Endothelial cell of umbilical vein (primary cell): ENCODE measurements at regions of chr9 and their contacts with region 1.

Region 1: DNA sequence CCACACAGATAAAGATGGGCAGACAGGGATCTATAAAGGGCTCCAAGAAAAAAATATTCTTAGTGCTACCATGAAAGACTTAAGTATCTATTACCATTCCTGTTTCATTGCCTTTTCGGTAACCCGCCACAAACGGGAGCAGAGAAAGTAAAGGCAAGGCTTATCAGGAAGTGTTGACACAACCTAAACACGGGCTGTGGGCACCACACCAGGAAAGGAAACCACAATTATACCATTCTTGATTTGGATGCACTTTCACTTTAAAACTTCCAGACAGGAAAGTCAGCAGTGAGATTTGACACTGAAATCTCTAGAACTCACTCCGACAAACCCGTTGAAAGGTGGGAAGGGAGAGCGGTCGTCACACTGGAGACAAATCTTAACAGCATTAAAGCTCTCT is 6.5 kb downstream of the TLE1 start:
- DNase-seq: peak; percentile 76
- H3K4me3 ChIP-seq: peak overlapping the region in 1 of 3 experiments; percentile 17
- H3K27ac ChIP-seq: peak overlapping the region; percentile 1
- H3K4me1 ChIP-seq: peaks cover 43% of the 10 kb centered on the region
- H3K27me3 ChIP-seq: no peaks in the 10 kb centered on the region
- CTCF ChIP-seq: no peak
- POLR2A ChIP-seq: no peak

Region 2: DNA sequence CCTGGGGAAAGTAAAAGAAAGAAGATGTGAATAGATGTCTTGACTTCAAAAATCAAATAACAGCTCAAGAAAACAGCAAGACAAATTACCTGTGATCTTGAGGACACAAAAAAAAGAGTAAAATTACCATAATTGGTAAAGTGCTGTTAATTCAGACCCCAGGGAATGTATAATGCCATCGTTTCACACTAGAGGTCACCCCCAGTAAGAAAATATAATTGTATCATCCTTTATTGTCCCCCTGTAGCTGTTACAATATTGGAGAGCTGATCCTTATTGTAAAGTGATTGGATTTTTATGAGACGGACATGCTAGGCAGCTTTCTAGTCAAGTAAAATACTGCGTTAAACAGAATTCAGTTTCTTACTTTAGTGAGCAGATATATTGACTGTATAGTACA is 370.5 kb before region 1 on chr9:
- CTCF ChIA-PET with region 1: interaction called, 9 read pairs
- POLR2A ChIA-PET with region 1: no interaction called
- dilution Hi-C with region 1: no loop called
- intact Hi-C with region 1: loop called (anchors 1 kb)
- DNase-seq: peak; percentile 32
- H3K4me3 ChIP-seq: no peak overlapping the region
- H3K27ac ChIP-seq: no peak overlapping the region
- H3K4me1 ChIP-seq: no peaks in the 10 kb centered on the region
- H3K27me3 ChIP-seq: no peaks in the 10 kb centered on the region
- CTCF ChIP-seq: peak in 1 of 2 donors; percentile 9
- POLR2A ChIP-seq: no peak

Region 3: DNA sequence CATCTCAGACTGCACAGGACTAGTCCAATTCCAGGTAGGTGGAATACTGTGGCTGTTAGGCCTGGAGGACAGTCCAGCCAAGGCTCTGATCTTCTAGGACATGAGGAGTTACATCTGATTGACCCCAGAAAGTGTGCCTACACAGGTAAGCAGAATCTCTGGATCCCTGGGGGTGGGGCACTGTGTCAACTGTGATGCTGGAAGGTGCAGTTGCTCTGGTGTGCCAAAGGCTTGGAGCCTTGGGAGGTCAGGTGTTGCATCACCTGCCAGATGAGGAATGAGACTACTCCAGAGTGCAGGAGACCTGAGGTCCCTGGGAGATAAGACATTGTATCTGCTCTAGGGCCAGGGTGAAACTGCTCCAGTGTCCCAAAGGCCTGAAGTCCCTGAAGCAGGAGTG is 356.2 kb before region 1 on chr9:
- CTCF ChIA-PET with region 1: no interaction called
- POLR2A ChIA-PET with region 1: no interaction called
- dilution Hi-C with region 1: no loop called
- intact Hi-C with region 1: no loop called
- DNase-seq: no peak
- H3K4me3 ChIP-seq: no peak overlapping the region
- H3K27ac ChIP-seq: no peak overlapping the region
- H3K4me1 ChIP-seq: peaks cover 3% of the 10 kb centered on the region
- H3K27me3 ChIP-seq: no peaks in the 10 kb centered on the region
- CTCF ChIP-seq: no peak
- POLR2A ChIP-seq: no peak

Region 4: DNA sequence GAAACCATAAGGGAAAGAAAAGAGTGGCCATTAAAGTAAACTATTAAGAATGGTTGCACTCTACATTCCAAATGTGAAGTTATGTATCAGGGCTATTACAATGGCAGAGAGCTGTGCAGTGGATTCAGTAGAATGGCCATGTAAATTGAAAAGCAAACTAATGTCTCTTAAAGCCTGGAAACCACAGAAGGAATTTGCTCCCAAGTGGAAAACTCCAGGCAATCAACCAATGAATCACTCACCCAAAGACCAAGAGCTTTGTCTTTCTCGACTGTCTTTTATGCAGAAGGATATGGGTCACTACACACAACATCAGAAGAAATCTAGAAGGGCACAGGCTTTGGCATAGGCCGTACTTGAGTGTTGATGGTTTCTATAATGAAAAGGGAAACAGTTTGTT is 108.4 kb before region 1 on chr9:
- CTCF ChIA-PET with region 1: no interaction called
- POLR2A ChIA-PET with region 1: no interaction called
- dilution Hi-C with region 1: no loop called
- intact Hi-C with region 1: no loop called
- DNase-seq: no peak
- H3K4me3 ChIP-seq: no peak overlapping the region
- H3K27ac ChIP-seq: no peak overlapping the region
- H3K4me1 ChIP-seq: peaks cover 12% of the 10 kb centered on the region
- H3K27me3 ChIP-seq: no peaks in the 10 kb centered on the region
- CTCF ChIP-seq: no peak
- POLR2A ChIP-seq: no peak

Region 5: DNA sequence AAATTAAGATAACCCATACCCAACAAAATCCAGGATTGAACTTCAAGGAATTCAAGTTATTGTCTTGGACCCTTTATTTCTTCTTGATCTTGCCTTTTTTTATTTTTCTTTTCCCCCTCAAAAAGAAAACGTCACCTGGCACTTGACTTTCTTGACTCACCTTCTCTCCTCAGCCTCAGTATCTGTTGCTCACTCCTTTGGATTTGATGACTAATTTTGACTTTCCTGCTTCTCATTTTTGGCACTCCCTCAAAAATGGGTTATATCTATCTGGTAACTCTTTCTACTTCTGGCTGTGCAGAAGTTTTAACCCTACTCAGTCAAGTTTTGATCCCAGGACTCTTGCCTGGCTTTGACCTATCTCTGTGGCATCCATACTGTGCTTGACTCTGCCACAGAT is 178.8 kb after region 1 on chr9:
- CTCF ChIA-PET with region 1: no interaction called
- POLR2A ChIA-PET with region 1: no interaction called
- dilution Hi-C with region 1: no loop called
- intact Hi-C with region 1: no loop called
- DNase-seq: no peak
- H3K4me3 ChIP-seq: no peak overlapping the region
- H3K27ac ChIP-seq: no peak overlapping the region
- H3K4me1 ChIP-seq: no peaks in the 10 kb centered on the region
- H3K27me3 ChIP-seq: peaks cover 1 to 2% of the 10 kb centered on the region in 2 experiments
- CTCF ChIP-seq: no peak
- POLR2A ChIP-seq: no peak